ENCODE measurements at regions of chr3 and their contacts with region 1.

Region 1: GRCh38 chr3:141441381-141442364 is 45.2 kb upstream of the RASA2 start:
- DNase-seq: peak in 1 of 2 experiments; percentile 90
- H3K4me3 ChIP-seq: no peak overlapping the region
- H3K27ac ChIP-seq: no peak overlapping the region
- H3K4me1 ChIP-seq: no peaks in the 10 kb centered on the region
- H3K27me3 ChIP-seq: no peaks in the 10 kb centered on the region
- CTCF ChIP-seq: peak; percentile 84 to 90 (median 89)
- EP300 ChIP-seq: 0 out of 3 replicates have a peak, but pooled peaks of 1 of the 2 experiments have one; percentile 8
- POLR2A ChIP-seq: no peak
- RAD21 ChIP-seq: peak; percentile 74 to 83

Region 2: DNA sequence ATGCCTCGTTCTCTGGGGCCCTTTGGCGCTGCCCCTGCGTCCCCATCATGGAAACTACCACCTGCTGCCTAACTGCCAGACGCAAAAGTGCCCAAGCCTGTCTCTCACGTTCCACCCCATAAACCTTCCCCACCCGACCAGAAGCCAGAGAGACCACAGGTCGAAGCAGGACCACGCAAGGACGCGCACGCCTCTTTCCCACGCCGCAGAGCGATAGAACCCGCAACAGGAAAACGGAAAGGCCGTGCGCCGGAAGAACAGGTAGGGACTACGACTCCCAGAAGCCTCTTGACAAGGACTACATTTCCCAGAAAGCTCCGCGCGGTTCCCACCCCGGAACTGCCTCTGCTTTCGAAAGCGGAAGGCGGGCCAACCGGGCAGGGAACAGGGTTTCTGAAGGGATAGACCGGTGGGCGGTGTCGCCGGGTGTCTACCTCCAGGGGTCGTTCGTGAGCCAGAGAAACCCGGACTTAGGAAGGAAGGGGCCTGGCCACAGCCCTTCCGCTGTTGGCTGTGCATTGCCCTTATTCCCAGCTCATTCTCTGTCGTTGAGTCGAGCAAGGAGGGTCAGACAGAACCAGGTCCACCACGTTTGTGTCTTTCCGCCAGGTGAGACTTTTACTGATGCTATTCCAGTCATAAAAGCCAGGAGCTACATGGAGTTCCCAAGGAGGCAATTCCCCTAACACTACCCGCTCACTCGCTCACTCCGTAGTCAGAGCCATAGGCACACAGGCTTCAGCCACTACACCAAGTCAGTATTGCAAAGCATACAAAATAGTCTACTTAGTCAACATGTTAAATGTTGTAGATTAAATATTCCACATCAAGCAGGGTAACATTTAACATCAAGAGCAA is 129.9 kb before region 1 on chr3:
- CTCF ChIA-PET with region 1: interaction called, 35 read pairs
- POLR2A ChIA-PET with region 1: no interaction called
- DNase-seq: peak; percentile 94 to 98
- H3K4me3 ChIP-seq: peak overlapping the region; percentile 69 to 99 (median 85)
- H3K27ac ChIP-seq: no peak overlapping the region
- H3K4me1 ChIP-seq: peaks cover 0 to 4% (median 2%) of the 10 kb centered on the region in 4 experiments; a peak in 4 of 7 replicates
- H3K27me3 ChIP-seq: peaks cover 0 to 7% (median 3%) of the 10 kb centered on the region in 4 experiments; a peak in 1 of 7 replicates
- CTCF ChIP-seq: peak; percentile 74 to 91 (median 84)
- EP300 ChIP-seq: no peak
- POLR2A ChIP-seq: peak; percentile 34 to 73
- RAD21 ChIP-seq: peak; percentile 89

Region 3: DNA sequence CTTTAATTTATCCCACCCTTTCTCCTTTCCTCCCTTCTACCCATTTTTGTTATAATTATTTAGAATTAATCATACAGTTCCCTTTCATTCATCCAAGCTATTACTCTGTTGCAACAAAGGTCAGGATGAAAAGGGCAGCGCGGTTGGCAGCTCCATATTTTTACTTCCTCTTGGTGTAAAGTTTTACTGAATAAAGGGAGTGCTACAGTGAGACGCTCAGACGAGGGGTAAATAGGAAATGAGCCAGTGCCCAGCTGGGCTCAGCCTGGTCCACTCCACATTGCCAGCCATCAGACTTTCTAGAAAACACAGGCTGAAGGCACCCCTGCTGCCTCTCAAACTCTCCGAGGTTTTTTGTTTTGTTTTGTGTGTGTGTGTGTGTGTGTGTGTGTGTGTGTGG is 95.3 kb before region 1 on chr3:
- CTCF ChIA-PET with region 1: interaction called, 11 read pairs
- POLR2A ChIA-PET with region 1: no interaction called
- DNase-seq: no peak
- H3K4me3 ChIP-seq: no peak overlapping the region
- H3K27ac ChIP-seq: no peak overlapping the region
- H3K4me1 ChIP-seq: no peaks in the 10 kb centered on the region
- H3K27me3 ChIP-seq: no peaks in the 10 kb centered on the region
- CTCF ChIP-seq: no peak
- EP300 ChIP-seq: no peak
- POLR2A ChIP-seq: no peak
- RAD21 ChIP-seq: no peak

Region 4: GRCh38 chr3:141402476-141403171 is 39.0 kb before region 1 on chr3:
- CTCF ChIA-PET with region 1: interaction called, 13 read pairs
- POLR2A ChIA-PET with region 1: no interaction called
- DNase-seq: peak in 1 of 2 experiments; percentile 77
- H3K4me3 ChIP-seq: peak overlapping the region; percentile 66 to 71 (median 66)
- H3K27ac ChIP-seq: peak overlapping the region; percentile 54; the same call in 1 of the 2 replicates
- H3K4me1 ChIP-seq: peaks cover 0 to 7% (median 4%) of the 10 kb centered on the region in 4 experiments; a peak in 4 of 7 replicates
- H3K27me3 ChIP-seq: peaks cover 0 to 17% (median 8%) of the 10 kb centered on the region in 4 experiments; a peak in 5 of 7 replicates
- CTCF ChIP-seq: no peak
- EP300 ChIP-seq: no peak
- POLR2A ChIP-seq: peak in 1 of 2 experiments; percentile 45; a peak in 2 of 3 replicates
- RAD21 ChIP-seq: no peak

Region 5: GRCh38 chr3:141426404-141427034 is 15.2 kb before region 1 on chr3:
- CTCF ChIA-PET with region 1: interaction called, 205 read pairs
- POLR2A ChIA-PET with region 1: interaction called, 4 read pairs
- DNase-seq: no peak
- H3K4me3 ChIP-seq: no peak overlapping the region
- H3K27ac ChIP-seq: no peak overlapping the region
- H3K4me1 ChIP-seq: peaks cover 0 to 8% (median 3%) of the 10 kb centered on the region in 4 experiments; a peak in 4 of 7 replicates
- H3K27me3 ChIP-seq: no peaks in the 10 kb centered on the region
- CTCF ChIP-seq: no peak
- EP300 ChIP-seq: no peak
- POLR2A ChIP-seq: no peak
- RAD21 ChIP-seq: no peak

Region 6: GRCh38 chr3:141460097-141460704 is 18.5 kb after region 1 on chr3:
- CTCF ChIA-PET with region 1: interaction called, 185 read pairs
- POLR2A ChIA-PET with region 1: interaction called, 3 read pairs
- DNase-seq: peak; percentile 69 to 92
- H3K4me3 ChIP-seq: no peak overlapping the region
- H3K27ac ChIP-seq: no peak overlapping the region
- H3K4me1 ChIP-seq: peaks cover 0 to 3% (median 0%) of the 10 kb centered on the region in 4 experiments; a peak in 3 of 7 replicates
- H3K27me3 ChIP-seq: no peaks in the 10 kb centered on the region
- CTCF ChIP-seq: peak; percentile 92 to 94 (median 94)
- EP300 ChIP-seq: no peak
- POLR2A ChIP-seq: no peak
- RAD21 ChIP-seq: peak; percentile 96 to 97

Measured in H1 (cell line).